ENCODE measurements at regions of chr1 and their contacts with region 1.

Region 1: GRCh38 chr1:234499119-234499942 is 20.4 kb upstream of the TARBP1 start:
- DNase-seq: no peak
- H3K4me3 ChIP-seq: no peak overlapping the region
- H3K27me3 ChIP-seq: no peaks in the 10 kb centered on the region
- CTCF ChIP-seq: peak; percentile 96

Region 2: DNA sequence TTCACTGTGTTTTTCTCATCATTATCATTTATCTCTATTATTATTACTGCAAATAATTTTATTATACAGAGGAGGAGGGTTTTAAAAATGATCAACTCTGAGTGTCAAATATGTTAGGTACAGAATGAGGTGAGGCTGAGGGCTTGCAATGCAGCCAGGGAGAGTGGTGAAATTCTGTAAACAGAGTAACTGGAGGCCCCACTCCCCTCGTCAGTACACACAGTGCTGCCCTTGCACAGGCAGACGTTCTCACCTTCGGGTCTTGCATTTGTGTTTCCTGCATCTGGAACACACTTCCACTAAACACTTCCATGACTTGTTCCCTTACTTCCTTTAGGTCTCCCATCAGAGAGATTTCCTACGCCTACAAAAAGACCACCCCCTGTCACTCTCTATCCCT is 150.4 kb before region 1 on chr1:
- CTCF ChIA-PET with region 1: no interaction called
- POLR2A ChIA-PET with region 1: no interaction called
- DNase-seq: no peak
- H3K4me3 ChIP-seq: no peak overlapping the region
- H3K27me3 ChIP-seq: peaks cover 3% of the 10 kb centered on the region; the same call in 1 of the 2 replicates
- CTCF ChIP-seq: no peak

Region 3: DNA sequence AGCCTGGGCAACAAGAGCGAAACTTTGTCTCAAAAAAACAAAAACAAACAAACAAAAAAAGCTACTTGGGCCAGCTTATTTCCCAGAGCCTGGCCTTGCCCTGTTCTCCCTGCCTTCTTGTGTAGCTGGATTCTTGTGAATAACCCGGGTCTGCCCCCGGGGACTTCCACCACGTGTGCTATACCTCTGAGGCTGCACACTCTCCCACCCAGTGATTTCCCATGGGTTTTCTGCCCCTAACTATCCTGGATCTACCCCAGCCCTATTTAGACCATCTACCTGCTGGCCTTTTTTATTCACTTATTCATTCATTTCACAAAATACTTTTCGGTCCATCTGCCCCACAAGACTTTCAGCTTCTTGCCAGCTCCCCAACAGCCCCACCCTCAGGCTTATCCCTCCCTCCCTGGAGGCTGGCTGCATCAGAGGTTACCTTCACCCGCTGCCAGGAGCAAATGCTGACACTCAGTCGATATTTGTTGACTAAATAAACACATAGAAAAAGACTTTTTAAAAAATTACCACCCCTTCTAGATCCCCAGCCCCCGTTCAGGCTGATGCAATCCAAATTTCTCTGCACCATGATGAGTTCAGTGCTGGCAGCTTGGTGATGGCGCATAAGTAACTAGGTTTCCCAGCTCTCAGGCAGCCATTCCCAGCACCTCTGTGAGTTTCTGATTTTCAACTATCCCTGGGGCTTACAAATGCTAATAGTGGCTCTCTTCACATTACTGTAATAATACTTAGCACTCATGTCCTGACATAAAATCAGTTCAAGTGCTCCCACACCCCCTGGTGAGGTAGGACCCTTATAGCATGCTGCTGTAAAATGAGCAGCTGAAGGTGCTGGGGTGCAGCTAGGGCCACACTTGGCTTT is 10.4 kb after region 1 on chr1:
- CTCF ChIA-PET with region 1: interaction called, 10 read pairs
- POLR2A ChIA-PET with region 1: interaction called, 4 read pairs
- DNase-seq: no peak
- H3K4me3 ChIP-seq: no peak overlapping the region
- H3K27me3 ChIP-seq: no peaks in the 10 kb centered on the region
- CTCF ChIP-seq: no peak

Region 4: DNA sequence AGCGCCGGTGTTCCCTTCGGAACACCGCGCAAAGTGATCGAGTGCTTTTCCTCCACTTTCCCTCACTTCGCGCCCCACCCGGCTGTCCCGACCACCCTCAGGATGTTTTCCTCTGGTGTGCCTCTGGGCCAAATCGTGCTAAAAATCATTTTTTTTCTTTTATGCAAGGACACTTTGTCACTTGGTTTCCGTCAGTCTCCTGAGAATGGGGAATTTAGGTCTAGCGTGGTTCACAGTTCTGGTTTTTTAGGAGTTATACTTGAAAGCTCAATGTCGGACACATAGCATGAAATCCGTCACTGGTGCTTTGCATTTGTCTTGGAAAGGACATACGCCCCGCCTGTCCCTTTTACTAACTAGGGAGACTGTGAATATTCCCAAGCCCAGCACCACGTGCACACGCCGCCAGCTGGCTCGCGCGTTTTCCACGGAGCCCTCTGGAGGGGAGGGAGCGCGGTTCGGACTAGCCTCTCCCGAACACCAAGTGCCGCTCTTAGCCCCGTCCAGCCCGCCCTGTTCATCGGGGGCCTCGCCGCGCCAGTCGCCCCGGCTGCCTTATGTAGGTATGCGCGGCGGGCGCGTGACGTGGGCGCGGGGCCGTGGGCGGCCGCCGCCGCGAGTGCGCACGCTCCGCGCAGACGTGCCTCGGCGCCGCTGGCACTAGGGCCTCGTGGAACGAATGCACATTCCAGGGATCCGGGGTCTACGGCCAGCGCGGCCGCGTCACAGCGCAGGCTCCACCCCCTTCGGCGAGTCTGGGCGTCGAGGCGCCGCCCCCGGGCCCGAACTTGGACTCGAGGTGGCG is 111.2 kb after region 1 on chr1:
- CTCF ChIA-PET with region 1: interaction called, 21 read pairs
- POLR2A ChIA-PET with region 1: interaction called, 3 read pairs
- DNase-seq: peak; percentile 68
- H3K4me3 ChIP-seq: peak overlapping the region; percentile 77
- H3K27me3 ChIP-seq: no peaks in the 10 kb centered on the region
- CTCF ChIP-seq: peak; percentile 19; the same call in 1 of the 2 replicates

Region 5: GRCh38 chr1:234970731-234971476 is 471.6 kb after region 1 on chr1:
- CTCF ChIA-PET with region 1: interaction called, 11 read pairs
- POLR2A ChIA-PET with region 1: no interaction called
- DNase-seq: peak; percentile 76
- H3K4me3 ChIP-seq: no peak overlapping the region
- H3K27me3 ChIP-seq: no peaks in the 10 kb centered on the region
- CTCF ChIP-seq: no peak

Region 6: DNA sequence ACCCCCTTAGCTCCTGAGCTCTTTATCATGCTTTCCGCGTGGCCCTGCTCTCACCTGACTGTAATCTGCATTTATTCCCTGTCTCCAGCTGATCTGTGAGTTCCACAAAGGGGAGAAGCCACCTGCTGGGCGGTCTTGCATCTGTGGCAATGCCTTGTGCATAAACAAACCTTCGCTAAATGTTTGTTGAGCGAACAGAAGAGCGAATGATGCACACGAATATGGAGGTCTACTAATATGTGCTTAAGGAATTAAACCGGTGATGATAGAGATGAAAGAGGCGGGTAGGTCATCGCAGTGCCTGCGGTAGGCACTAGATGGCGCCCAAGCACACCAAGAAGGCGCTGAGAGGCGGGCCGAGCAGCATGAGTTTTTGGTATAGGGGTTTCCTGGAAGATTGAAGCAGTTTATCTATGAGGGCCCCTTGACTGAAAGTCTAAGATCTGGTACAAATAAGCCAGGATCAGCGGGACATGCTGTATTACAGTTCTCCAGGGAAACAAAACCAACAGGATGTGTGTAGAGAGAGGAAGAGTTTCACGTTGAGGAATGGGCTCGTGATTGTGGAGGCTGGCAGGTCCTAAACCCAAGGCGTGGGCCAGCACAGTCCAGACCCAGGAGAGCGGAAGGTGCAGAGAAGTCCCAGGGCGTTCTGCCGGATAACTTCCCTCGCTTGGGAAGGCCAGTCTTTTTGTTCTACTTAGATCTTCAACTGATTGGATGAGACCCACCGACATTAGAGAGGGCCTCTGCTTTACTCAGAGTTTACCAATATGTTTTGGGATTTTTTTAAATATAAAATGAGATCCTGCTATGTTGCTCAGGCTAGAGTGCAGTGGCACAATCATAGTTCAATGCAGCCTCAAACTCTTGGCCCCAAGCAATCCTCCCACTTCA is 594.6 kb after region 1 on chr1:
- CTCF ChIA-PET with region 1: interaction called, 26 read pairs
- POLR2A ChIA-PET with region 1: no interaction called
- DNase-seq: no peak
- H3K4me3 ChIP-seq: no peak overlapping the region
- H3K27me3 ChIP-seq: no peaks in the 10 kb centered on the region; the same call in 1 of the 2 replicates
- CTCF ChIP-seq: peak; percentile 95

Measured in BJ (cell line).